CD8-positive, alpha-beta T cell (primary cell): ENCODE measurements at regions of chr10 and their contacts with region 1.

Region 1: DNA sequence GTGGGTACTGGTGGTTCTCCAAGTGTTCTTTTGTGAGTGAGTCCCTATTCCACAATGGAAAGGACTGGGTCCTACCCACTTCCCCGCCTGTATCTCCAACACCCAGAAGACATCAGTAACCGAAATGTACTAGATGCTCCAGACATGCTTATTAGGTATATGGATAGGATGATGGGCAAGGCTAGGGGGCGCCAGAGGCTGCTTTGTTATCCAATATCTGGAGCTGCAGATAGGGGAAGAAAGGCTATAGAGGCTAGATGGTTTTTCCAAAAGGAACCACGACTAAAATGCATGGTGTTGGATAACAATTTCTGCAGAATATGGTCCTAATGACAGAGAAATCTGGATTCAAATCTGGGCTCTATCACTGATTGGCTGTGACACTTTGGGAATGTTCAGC is 56.2 kb upstream of the TM9SF3 start:
- DNase-seq: peak; percentile 26 to 78 (median 59)
- ATAC-seq: peak; percentile 41
- H3K4me3 ChIP-seq: no peak overlapping the region
- H3K4me3 Mint-ChIP-seq: no peak overlapping the region
- H3K27ac ChIP-seq: no peak overlapping the region
- H3K27ac Mint-ChIP-seq: no peak overlapping the region
- H3K4me1 ChIP-seq: no peaks in the 10 kb centered on the region
- H3K4me1 Mint-ChIP-seq: peaks cover 12% of the 10 kb centered on the region
- H3K27me3 ChIP-seq: no peaks in the 10 kb centered on the region
- H3K27me3 Mint-ChIP-seq: no peaks in the 10 kb centered on the region
- CTCF ChIP-seq: peak; percentile 25

Region 2: GRCh38 chr10:96719850-96720421 is 77.0 kb after region 1 on chr10:
- CTCF ChIA-PET with region 1: interaction called, 5 read pairs
- POLR2A ChIA-PET with region 1: no interaction called
- intact Hi-C with region 1: loop called (anchors 1 to 2 kb)
- DNase-seq: peak; percentile 27 to 80 (median 58)
- ATAC-seq: peak; percentile 53
- H3K4me3 ChIP-seq: peak overlapping the region; percentile 53 to 81
- H3K4me3 Mint-ChIP-seq: peak overlapping the region; percentile 95
- H3K27ac ChIP-seq: peak overlapping the region in 1 of 2 experiments; percentile 88
- H3K27ac Mint-ChIP-seq: peak overlapping the region; percentile 88
- H3K4me1 ChIP-seq: peaks cover 7% of the 10 kb centered on the region
- H3K4me1 Mint-ChIP-seq: peaks cover 40% of the 10 kb centered on the region
- H3K27me3 ChIP-seq: no peaks in the 10 kb centered on the region
- H3K27me3 Mint-ChIP-seq: no peaks in the 10 kb centered on the region
- CTCF ChIP-seq: peak; percentile 28

Region 3: GRCh38 chr10:96743988-96744585 is 101.1 kb after region 1 on chr10:
- CTCF ChIA-PET with region 1: interaction called, 7 read pairs
- POLR2A ChIA-PET with region 1: no interaction called
- intact Hi-C with region 1: loop called in 1 of 2 experiments (anchors 2 kb)
- DNase-seq: peak in 2 of 9 experiments; percentile 34 to 54
- ATAC-seq: no peak
- H3K4me3 ChIP-seq: no peak overlapping the region
- H3K4me3 Mint-ChIP-seq: no peak overlapping the region
- H3K27ac ChIP-seq: no peak overlapping the region
- H3K27ac Mint-ChIP-seq: no peak overlapping the region
- H3K4me1 ChIP-seq: no peaks in the 10 kb centered on the region
- H3K4me1 Mint-ChIP-seq: peaks cover 7% of the 10 kb centered on the region
- H3K27me3 ChIP-seq: no peaks in the 10 kb centered on the region
- H3K27me3 Mint-ChIP-seq: no peaks in the 10 kb centered on the region
- CTCF ChIP-seq: no peak

Region 4: DNA sequence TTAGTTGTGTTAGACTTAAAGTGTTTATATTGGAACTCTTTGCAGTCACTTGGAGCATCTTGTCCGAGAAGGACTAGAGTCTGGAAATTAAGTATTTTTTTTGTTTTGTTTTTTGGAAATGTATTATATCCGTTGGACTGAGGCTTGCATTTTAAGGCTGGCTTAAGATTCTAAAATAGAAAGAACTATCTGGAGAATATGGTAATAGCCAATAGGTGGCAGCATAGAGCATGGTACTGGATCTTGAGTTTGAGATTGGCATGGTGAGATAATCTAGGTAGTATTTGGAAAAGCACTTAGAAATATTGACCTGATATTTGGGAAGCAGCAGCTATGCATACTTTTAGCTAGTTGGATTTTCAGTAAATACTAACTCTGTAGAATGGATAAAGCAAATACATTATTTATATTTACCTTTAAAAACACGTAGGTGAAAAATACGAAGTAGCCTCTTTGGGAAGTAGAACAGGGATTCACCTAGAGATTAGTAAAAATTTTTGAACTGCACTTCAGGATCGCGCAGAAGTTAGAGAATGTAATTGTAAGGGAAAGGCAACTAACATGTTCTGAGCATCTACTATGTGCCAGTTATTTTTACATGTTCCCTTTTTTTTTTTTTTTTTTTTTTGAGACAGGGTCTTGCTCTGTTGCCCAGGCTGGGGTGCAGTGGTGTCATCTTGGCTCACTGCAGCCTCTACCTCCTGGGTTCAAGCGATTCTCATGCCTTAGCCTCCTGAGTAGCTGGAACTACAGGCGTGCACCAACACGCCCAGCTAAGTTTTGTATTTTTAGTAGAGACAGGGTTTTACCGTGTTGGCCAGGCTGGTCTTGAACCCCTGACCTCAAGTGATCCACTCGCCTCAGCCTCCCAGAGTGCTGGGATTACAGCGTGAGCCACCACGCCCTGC is 267.8 kb after region 1 on chr10:
- CTCF ChIA-PET with region 1: interaction called, 3 read pairs
- POLR2A ChIA-PET with region 1: no interaction called
- intact Hi-C with region 1: loop called in 1 of 2 experiments (anchors 10 kb)
- DNase-seq: peak in 3 of 9 experiments; percentile 9 to 65 (median 56)
- ATAC-seq: peak; percentile 66
- H3K4me3 ChIP-seq: no peak overlapping the region
- H3K4me3 Mint-ChIP-seq: no peak overlapping the region
- H3K27ac ChIP-seq: no peak overlapping the region
- H3K27ac Mint-ChIP-seq: no peak overlapping the region
- H3K4me1 ChIP-seq: no peaks in the 10 kb centered on the region
- H3K4me1 Mint-ChIP-seq: peaks cover 33% of the 10 kb centered on the region
- H3K27me3 ChIP-seq: no peaks in the 10 kb centered on the region
- H3K27me3 Mint-ChIP-seq: no peaks in the 10 kb centered on the region
- CTCF ChIP-seq: peak; percentile 88

Region 5: DNA sequence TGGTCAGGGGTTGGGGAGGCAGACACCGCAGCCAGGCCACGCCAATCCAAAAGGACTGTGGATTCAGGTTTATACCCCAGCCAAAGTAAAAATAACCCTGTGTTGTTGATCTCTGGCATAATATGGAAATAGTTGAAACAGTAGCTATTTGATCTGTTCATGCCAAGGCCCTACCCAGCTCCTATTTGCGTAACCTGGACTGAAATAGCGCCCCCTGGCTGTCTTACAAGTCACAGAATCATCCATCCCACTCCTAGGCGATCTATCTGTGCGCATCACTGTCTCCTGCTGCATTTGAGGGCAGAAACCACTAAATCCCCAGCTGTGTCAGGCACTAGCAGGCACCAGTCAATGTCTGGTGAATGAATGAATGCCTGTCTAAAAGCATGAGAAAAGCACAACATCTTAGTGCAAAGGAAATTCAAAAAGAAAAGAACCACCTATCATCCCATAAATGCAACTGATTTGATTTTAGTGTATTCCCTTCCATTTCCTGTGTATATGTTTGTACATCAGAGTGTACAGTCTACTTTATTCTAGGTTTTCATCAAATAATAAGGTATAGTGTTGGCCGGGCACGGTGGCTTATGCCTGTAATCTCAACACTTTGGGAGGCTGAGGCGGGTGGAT is 382.8 kb after region 1 on chr10:
- CTCF ChIA-PET with region 1: interaction called, 7 read pairs
- POLR2A ChIA-PET with region 1: no interaction called
- intact Hi-C with region 1: loop called (anchors 2 to 10 kb)
- DNase-seq: peak in 8 of 9 experiments; percentile 23 to 69 (median 51)
- ATAC-seq: no peak
- H3K4me3 ChIP-seq: no peak overlapping the region
- H3K4me3 Mint-ChIP-seq: no peak overlapping the region
- H3K27ac ChIP-seq: no peak overlapping the region
- H3K27ac Mint-ChIP-seq: no peak overlapping the region
- H3K4me1 ChIP-seq: no peaks in the 10 kb centered on the region
- H3K4me1 Mint-ChIP-seq: no peaks in the 10 kb centered on the region
- H3K27me3 ChIP-seq: no peaks in the 10 kb centered on the region
- H3K27me3 Mint-ChIP-seq: no peaks in the 10 kb centered on the region
- CTCF ChIP-seq: peak; percentile 67